ENCODE measurements at regions of chr7 and their contacts with region 1.

Region 1: GRCh38 chr7:1043552-1044190 is 675 bp upstream of the GPR146 start:
- DNase-seq: no peak
- H3K4me3 ChIP-seq: peak overlapping the region; percentile 16 to 76 (median 72)
- H3K27ac ChIP-seq: peak overlapping the region; percentile 86 to 94 (median 94)
- H3K4me1 ChIP-seq: peaks cover 0 to 46% (median 29%) of the 10 kb centered on the region in 4 donors
- H3K27me3 ChIP-seq: no peaks in the 10 kb centered on the region
- CTCF ChIP-seq: no peak
- EP300 ChIP-seq: no peak
- POLR2A ChIP-seq: no peak

Region 2: GRCh38 chr7:1028031-1028770 is 15.5 kb before region 1 on chr7:
- intact Hi-C with region 1: loop called (anchors 2 kb)
- DNase-seq: peak; percentile 95
- H3K4me3 ChIP-seq: peak overlapping the region; percentile 47 to 97 (median 74)
- H3K27ac ChIP-seq: peak overlapping the region; percentile 93 to 97 (median 96)
- H3K4me1 ChIP-seq: peaks cover 0 to 44% (median 25%) of the 10 kb centered on the region in 4 donors
- H3K27me3 ChIP-seq: no peaks in the 10 kb centered on the region
- CTCF ChIP-seq: no peak
- EP300 ChIP-seq: peak in 2 of 4 donors; percentile 26 to 58
- POLR2A ChIP-seq: peak in 1 of 2 donors; percentile 13